IMR-90 (cell line): ENCODE measurements at regions of chr3 and their contacts with region 1.

Region 1: GRCh38 chr3:20039766-20040475 is at the start of gene KAT2B:
- DNase-seq: peak; percentile 26
- ATAC-seq: peak; percentile 73
- H3K4me3 ChIP-seq: peak within 1 kb of the TSS; percentile 90
- H3K27ac ChIP-seq: peak within 1 kb of the TSS; percentile 69
- H3K4me1 ChIP-seq: no peaks in the 10 kb centered on the region; the same call in 1 of the 2 replicates
- H3K27me3 ChIP-seq: no peaks in the 10 kb centered on the region
- CTCF ChIP-seq: peak; percentile 46
- POLR2A ChIP-seq: no peak
- RAD21 ChIP-seq: no peak
- total RNA-seq, gene KAT2B: 2.2 and 3.1 TPM in 2 replicates

Region 2: GRCh38 chr3:19885468-19885867 is 154.5 kb before region 1 on chr3:
- CTCF ChIA-PET with region 1: no interaction called
- POLR2A ChIA-PET with region 1: no interaction called
- dilution Hi-C with region 1: no loop called
- in situ Hi-C with region 1: no loop called
- intact Hi-C with region 1: loop called (anchors 1 kb)
- DNase-seq: peak; percentile 41
- ATAC-seq: no peak
- H3K4me3 ChIP-seq: no peak overlapping the region
- H3K27ac ChIP-seq: no peak overlapping the region
- H3K4me1 ChIP-seq: peaks cover 10% of the 10 kb centered on the region
- H3K27me3 ChIP-seq: no peaks in the 10 kb centered on the region
- CTCF ChIP-seq: peak; percentile 62
- POLR2A ChIP-seq: no peak
- RAD21 ChIP-seq: peak; percentile 58

Region 3: DNA sequence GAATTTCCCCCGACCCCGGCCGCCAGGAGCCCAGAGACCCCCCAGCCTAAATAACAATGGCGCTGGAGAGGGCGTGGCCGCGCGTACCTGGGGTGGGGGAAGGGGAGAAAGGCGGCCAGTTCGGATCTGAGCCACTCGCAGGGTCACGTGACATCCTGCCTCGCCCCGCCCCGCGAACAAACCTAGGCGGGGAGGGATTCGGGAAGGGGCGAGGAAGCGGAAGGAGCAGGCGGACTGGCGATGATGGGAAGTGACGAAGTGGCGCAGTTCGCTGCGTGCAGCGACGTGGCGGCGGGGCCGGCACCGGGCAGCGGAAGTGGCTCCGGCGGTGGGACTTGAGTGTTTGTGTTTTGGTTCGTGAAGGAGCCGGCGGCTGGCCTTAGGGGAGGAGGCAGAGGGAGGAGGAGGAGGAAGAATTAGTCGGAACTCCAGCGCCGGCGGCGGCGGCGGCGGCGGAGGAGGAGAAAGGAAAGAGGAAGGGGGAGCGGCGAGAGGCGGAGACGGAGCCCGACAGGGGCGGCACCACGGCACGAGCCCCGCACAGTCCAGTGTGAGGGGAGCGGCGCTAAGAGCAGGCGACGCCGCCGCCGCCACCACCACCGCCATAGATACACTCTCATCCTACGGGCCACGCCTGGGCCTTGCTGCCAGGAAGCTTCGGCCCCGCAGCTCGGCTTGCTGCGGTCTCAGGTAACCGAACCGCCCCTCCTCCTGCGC is 92.9 kb before region 1 on chr3 and contains the start of gene RAB5A:
- CTCF ChIA-PET with region 1: no interaction called
- POLR2A ChIA-PET with region 1: no interaction called
- dilution Hi-C with region 1: no loop called
- in situ Hi-C with region 1: no loop called
- intact Hi-C with region 1: loop called (anchors 5 kb)
- DNase-seq: peak; percentile 98
- ATAC-seq: peak; percentile 91
- H3K4me3 ChIP-seq: peak within 1 kb of the TSS; percentile 95
- H3K27ac ChIP-seq: peak within 1 kb of the TSS; percentile 88
- H3K4me1 ChIP-seq: peaks cover 6% of the 10 kb centered on the region; the same call in 1 of the 2 replicates
- H3K27me3 ChIP-seq: no peaks in the 10 kb centered on the region
- CTCF ChIP-seq: no peak
- POLR2A ChIP-seq: peak; percentile 87
- RAD21 ChIP-seq: no peak
- total RNA-seq, gene RAB5A: 46.4 and 82.8 TPM in 2 replicates

Region 4: DNA sequence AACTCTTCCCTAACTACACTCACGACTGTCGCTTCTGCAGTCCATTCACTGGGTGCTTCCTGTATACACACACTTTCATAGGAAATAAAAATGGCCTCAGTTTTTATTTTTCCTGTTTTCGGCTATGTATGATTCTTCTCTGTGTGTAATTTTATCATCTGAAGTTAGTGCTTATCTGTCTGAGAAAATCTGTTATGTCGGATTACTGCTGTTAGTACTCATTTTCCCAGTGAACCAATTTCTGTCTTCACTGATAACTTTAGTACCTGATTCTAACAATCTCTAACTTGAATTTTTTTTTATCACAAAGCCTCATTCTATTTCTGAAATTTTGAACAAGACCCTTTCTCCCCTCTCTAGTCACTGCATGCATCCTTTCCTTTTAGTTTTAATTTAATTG is 72.1 kb before region 1 on chr3:
- CTCF ChIA-PET with region 1: no interaction called
- POLR2A ChIA-PET with region 1: no interaction called
- dilution Hi-C with region 1: no loop called
- in situ Hi-C with region 1: no loop called
- intact Hi-C with region 1: loop called (anchors 5 kb)
- DNase-seq: no peak
- ATAC-seq: no peak
- H3K4me3 ChIP-seq: no peak overlapping the region
- H3K27ac ChIP-seq: no peak overlapping the region
- H3K4me1 ChIP-seq: peaks cover 3% of the 10 kb centered on the region
- H3K27me3 ChIP-seq: no peaks in the 10 kb centered on the region
- CTCF ChIP-seq: no peak
- POLR2A ChIP-seq: no peak
- RAD21 ChIP-seq: no peak

Region 5: GRCh38 chr3:20141851-20142250 is 101.9 kb after region 1 on chr3:
- CTCF ChIA-PET with region 1: no interaction called
- POLR2A ChIA-PET with region 1: no interaction called
- dilution Hi-C with region 1: no loop called
- in situ Hi-C with region 1: no loop called
- intact Hi-C with region 1: no loop called
- DNase-seq: no peak
- ATAC-seq: peak; percentile 27; the same call in 1 of the 2 replicates
- H3K4me3 ChIP-seq: no peak overlapping the region
- H3K27ac ChIP-seq: no peak overlapping the region
- H3K4me1 ChIP-seq: no peaks in the 10 kb centered on the region
- H3K27me3 ChIP-seq: no peaks in the 10 kb centered on the region
- CTCF ChIP-seq: no peak
- POLR2A ChIP-seq: no peak
- RAD21 ChIP-seq: no peak

Region 6: DNA sequence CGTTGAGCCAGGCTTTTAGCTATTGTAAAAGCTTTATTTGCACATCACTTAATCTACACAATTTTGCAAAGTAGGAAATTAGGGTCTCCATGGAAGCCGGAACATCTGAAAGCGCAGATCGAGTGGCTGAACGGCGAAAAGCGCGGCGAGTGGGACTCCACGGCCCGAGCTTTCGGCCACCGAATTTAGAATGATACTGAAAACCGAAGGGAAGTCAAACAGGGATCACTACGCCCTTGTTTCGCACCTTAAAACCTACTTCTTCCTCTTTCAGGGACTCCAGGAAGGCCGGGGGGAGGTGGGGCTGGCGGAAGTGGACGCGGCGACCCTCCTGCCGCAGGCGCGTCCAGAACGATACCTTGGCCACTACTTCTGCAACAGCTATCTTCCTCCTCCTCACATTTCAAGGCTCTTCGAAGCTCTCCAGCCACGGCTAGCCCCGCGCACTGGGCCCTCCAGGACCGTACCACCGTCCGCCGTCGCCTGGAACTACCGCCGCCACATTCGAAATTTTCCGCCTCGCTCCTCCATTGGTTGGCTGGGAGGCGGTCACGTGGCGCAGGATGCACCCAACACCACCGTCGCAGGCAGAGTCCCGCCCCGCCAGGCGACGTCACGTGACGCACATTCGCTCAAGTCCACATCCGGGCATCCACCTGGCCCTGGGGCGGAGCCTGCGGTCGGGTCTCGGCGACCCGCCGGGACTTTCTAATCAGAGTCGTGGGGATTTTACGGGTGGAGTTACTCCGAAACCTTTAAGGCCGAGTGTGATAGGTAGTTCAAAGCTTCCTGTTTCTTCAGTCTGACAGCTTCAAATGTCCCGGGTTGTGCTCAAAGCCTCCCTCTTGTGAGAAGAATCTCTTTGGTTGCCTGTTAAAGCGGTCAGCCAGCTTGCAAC is 146.0 kb after region 1 on chr3 and contains the start of gene SGO1:
- CTCF ChIA-PET with region 1: interaction called, 4 read pairs
- POLR2A ChIA-PET with region 1: interaction called, 6 read pairs
- dilution Hi-C with region 1: no loop called
- in situ Hi-C with region 1: no loop called
- intact Hi-C with region 1: loop called (anchors 1 kb)
- DNase-seq: peak; percentile 96
- ATAC-seq: peak; percentile 96
- H3K4me3 ChIP-seq: peak within 1 kb of the TSS; percentile 89
- H3K27ac ChIP-seq: peak within 1 kb of the TSS; percentile 93
- H3K4me1 ChIP-seq: no peaks in the 10 kb centered on the region
- H3K27me3 ChIP-seq: no peaks in the 10 kb centered on the region
- CTCF ChIP-seq: no peak
- POLR2A ChIP-seq: peak; percentile 90
- RAD21 ChIP-seq: no peak
- total RNA-seq, gene SGO1: 5.2 and 8.1 TPM in 2 replicates

Region 7: DNA sequence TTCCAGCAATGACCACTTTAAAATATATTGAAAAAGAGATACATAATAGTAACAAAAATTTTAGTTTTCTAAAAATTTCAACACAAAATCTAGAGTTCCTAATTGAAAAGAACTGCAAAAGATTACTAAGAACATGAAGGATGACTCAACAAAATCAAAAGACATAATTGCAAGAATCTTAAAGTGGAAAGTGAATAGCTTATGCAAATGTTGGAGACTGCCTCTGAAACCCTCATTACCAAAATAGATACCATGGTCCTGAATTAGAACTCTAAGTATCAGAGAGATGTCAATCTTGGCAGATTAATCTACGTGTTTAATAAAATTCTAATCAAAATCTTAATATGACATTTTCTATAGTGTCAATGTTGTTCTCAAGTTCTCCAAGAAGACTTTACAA is 206.7 kb after region 1 on chr3:
- CTCF ChIA-PET with region 1: no interaction called
- POLR2A ChIA-PET with region 1: no interaction called
- dilution Hi-C with region 1: no loop called
- in situ Hi-C with region 1: no loop called
- intact Hi-C with region 1: no loop called
- DNase-seq: no peak
- ATAC-seq: no peak
- H3K4me3 ChIP-seq: no peak overlapping the region
- H3K27ac ChIP-seq: no peak overlapping the region
- H3K4me1 ChIP-seq: no peaks in the 10 kb centered on the region
- H3K27me3 ChIP-seq: no peaks in the 10 kb centered on the region
- CTCF ChIP-seq: no peak
- POLR2A ChIP-seq: no peak
- RAD21 ChIP-seq: no peak

Region 8: DNA sequence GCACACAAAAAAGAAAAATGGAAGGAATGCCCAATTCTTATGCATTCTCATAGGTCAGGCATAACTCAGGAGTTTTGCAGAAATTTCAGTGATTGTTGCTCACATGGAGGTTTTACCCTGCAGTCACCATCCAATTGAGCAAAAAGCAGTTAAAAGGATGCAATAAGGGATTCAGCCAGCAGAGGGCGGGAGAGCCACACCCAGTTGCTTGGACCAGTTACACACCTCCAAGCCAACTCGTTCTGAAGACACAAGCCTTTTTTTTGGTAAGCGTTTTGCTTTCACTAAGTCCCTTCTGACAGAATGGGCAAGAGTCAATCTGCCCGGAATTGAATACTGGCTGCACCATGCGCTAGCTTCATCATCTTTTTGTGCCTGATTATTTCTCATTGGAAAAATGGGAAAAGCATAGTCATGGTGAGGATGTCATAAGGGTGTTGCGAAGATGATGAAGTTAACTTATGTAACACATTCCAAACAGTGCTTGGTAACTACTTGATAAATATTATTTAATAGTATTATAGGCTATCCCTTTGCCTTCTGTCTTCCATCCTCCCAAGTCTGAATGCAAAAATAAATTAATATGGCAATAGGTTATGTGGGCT is 300.5 kb after region 1 on chr3:
- CTCF ChIA-PET with region 1: no interaction called
- POLR2A ChIA-PET with region 1: no interaction called
- dilution Hi-C with region 1: no loop called
- in situ Hi-C with region 1: no loop called
- intact Hi-C with region 1: loop called (anchors 10 kb)
- DNase-seq: peak; percentile 50
- ATAC-seq: peak; percentile 87
- H3K4me3 ChIP-seq: no peak overlapping the region
- H3K27ac ChIP-seq: no peak overlapping the region
- H3K4me1 ChIP-seq: no peaks in the 10 kb centered on the region
- H3K27me3 ChIP-seq: no peaks in the 10 kb centered on the region
- CTCF ChIP-seq: peak; percentile 85
- POLR2A ChIP-seq: no peak
- RAD21 ChIP-seq: peak; percentile 81